Activated CD4-positive, alpha-beta T cell treated with anti-CD3 and anti-CD28 coated beads for 36 hours (primary cell): ENCODE measurements at regions of chr14 and their contacts with region 1.

Region 1: GRCh38 chr14:91078095-91078737 is 17.8 kb upstream of the RPS6KA5 start:
- DNase-seq: peak; percentile 73
- ATAC-seq: peak; percentile 97
- H3K4me3 Mint-ChIP-seq: peak overlapping the region; percentile 23
- H3K27ac Mint-ChIP-seq: peak overlapping the region; percentile 85
- H3K4me1 Mint-ChIP-seq: peaks cover 30% of the 10 kb centered on the region
- H3K27me3 Mint-ChIP-seq: peaks cover 5% of the 10 kb centered on the region

Region 2: DNA sequence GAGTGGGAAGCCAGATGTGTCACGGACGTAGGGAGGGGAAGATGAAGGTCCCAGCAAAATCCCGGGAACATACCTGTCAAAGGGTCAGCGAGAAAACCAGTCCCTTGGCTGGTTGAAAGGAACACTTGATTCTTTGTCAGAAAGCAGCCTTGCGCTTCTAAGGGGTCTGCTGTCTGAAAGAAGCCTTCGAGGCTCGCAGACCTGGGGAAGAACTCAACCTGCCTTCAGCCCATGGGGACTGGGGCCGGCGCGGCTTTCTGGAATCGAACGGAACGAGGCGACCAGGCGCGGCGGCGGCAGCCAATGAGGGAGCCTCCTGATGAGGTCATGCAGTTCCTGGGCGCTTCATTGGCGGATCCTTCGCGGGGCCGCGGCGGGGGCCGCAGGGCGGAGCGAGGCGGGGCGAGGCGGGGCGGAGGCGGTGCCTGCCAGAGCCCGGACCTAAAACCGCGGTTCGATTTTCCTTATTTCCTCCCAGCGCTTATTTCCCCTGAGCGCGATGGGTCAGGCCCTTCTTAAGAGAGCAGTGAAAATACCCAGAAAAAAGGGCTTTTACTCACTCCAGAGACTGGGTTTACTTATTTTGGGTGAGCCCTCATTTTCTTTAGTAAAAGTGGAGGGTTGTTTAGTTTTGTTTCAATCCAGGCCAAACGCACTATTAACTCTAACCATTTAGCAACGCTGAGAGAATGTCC is 250.2 kb before region 1 on chr14:
- CTCF ChIA-PET with region 1: no interaction called
- POLR2A ChIA-PET with region 1: no interaction called
- intact Hi-C with region 1: loop called in 1 of 2 experiments (anchors 5 kb)
- DNase-seq: peak; percentile 95
- ATAC-seq: peak; percentile 99
- H3K4me3 Mint-ChIP-seq: peak overlapping the region; percentile 68
- H3K27ac Mint-ChIP-seq: peak overlapping the region; percentile 88
- H3K4me1 Mint-ChIP-seq: peaks cover 20% of the 10 kb centered on the region
- H3K27me3 Mint-ChIP-seq: no peaks in the 10 kb centered on the region

Region 3: DNA sequence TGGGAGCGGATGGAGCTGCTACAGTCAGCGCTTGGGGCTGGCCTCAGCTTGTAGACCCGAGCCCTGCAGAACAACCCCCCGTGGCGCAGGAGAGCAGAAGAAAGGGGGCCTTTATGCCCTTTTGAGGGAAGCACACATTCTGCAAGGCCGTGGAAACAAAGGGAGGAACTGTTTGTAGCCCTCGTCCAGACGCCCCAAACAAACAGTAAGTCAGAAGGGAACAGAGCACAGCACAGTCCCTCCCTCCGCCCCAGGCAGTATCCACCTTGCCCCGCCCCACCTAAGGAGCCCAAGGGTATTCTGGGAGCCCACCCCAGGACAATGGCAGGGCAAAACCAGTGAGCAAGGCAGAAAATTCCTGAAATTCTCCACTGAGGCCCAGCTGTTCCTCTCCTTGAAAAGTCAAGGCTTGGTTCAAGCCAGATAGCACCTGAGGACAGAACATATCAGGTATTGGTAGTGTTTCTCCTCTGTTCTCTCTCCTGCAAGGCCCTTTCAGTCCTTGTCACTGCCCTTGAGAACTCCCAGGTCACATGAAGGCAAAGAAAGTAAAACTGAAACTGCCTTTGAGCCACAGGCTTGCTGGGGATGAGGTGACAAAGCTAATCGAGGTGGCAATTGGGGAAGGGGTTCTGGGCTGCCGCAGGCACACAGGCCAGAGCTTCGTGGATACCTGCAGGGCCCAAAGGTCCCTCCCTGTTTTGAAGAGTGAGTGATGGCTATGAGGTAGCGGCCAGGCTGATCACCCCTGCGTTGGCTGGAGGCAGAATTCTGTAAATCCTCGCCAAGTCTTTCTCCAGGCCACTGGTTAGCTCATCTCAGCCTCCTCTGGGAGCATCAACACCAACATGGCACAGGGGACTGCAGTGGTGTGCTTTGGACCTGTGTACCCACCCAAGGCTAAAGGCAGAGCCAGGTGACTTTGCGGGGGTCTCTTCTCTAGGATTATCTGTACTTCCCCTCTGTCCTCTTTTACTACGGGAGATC is 36.2 kb after region 1 on chr14:
- CTCF ChIA-PET with region 1: interaction called, 3 read pairs
- POLR2A ChIA-PET with region 1: interaction called, 5 read pairs
- intact Hi-C with region 1: loop called (anchors 1 kb)
- DNase-seq: peak; percentile 82
- ATAC-seq: peak; percentile 82
- H3K4me3 Mint-ChIP-seq: peak overlapping the region; percentile 99
- H3K27ac Mint-ChIP-seq: peak overlapping the region; percentile 99
- H3K4me1 Mint-ChIP-seq: peaks cover 70% of the 10 kb centered on the region
- H3K27me3 Mint-ChIP-seq: no peaks in the 10 kb centered on the region